Mucosa of descending colon (tissue), 3 donors: ENCODE measurements at regions of chr2 and their contacts with region 1.

Region 1: DNA sequence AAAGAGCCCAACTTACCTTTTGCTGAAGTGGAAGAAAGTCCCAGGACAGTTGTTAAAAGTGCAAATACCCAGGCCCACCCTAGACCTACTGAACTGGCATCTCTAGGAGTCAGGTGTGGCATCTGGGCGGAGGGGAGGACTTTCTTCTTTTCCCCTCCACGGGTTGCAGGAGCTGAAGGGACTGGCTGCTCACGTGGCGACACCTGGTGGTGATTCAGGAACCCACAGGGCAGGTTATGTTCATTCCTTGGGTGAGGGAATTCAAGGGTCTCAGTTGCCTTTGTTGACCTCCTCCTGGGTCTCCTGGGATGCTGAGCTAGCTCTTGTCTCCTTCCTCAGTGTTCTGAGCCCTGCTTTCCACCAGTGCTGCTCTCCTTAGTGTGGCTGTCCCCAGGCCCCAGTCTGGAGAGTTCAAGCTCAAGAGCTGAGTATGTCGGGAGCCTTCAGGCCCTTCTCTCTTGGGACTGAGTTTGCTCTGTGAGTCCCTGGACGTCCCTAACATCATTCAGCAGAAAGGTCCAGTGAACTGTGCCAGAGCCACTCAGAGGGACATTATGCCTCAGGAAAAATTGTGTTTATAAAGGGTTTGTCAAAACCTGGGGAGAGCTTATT is 56.9 kb downstream of the DYSF start:
- DNase-seq: peak in 2 of 3 donors; percentile 73 to 82
- ATAC-seq: peak; percentile 67
- H3K4me3 ChIP-seq: no peak overlapping the region
- H3K4me1 ChIP-seq: no peaks in the 10 kb centered on the region
- CTCF ChIP-seq: peak; percentile 82

Region 2: DNA sequence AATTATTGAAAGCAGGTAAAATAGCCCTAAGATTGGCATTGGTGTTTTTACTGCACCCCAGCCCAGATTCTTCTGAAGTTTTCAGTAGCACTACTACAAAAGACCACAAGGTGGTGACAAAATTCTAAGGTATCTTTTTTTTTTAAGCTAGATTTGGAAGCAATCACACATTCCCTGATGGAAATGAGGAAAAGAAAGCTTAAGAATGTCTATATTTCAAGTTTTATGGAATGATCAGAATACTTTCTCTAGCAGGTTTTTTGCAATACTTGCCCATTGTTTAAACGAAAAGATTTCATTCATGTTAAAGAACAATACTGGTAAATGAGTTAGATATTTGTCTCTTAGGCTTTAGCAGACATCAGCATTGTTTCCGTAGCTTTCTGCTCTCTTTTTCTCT is 210.8 kb before region 1 on chr2:
- intact Hi-C with region 1: loop called (anchors 5 kb)
- DNase-seq: peak in 1 of 3 donors; percentile 21
- ATAC-seq: peak; percentile 46
- H3K4me3 ChIP-seq: no peak overlapping the region
- H3K4me1 ChIP-seq: no peaks in the 10 kb centered on the region
- CTCF ChIP-seq: peak; percentile 42

Region 3: DNA sequence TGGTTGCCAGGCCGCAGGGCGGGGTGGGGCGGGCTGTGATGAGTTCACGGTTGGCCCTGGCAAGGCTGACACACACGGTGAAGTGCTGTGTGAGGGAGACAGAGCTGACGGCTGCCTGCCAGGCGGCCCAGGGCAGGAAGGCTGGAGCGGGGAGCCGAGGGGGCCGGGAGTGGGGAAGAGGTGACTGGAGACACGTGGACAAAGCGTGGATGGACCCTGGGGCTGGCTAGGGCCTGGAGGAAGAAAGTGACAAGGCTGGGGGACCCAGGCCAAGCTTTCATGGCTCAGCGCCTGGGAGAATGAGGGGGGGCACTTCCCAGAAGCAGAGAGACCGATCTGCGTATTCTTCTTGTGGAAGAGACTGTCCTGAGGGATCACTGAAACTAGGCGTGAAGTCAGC is 66.2 kb after region 1 on chr2:
- intact Hi-C with region 1: no loop called
- DNase-seq: no peak
- ATAC-seq: no peak
- H3K4me3 ChIP-seq: no peak overlapping the region
- H3K4me1 ChIP-seq: no peaks in the 10 kb centered on the region
- CTCF ChIP-seq: no peak

Region 4: GRCh38 chr2:71668326-71669057 is 158.2 kb after region 1 on chr2:
- intact Hi-C with region 1: no loop called
- DNase-seq: no peak
- ATAC-seq: no peak
- H3K4me3 ChIP-seq: no peak overlapping the region
- H3K4me1 ChIP-seq: no peaks in the 10 kb centered on the region
- CTCF ChIP-seq: no peak